ENCODE measurements at regions of chr10 and their contacts with region 1.

Region 1: DNA sequence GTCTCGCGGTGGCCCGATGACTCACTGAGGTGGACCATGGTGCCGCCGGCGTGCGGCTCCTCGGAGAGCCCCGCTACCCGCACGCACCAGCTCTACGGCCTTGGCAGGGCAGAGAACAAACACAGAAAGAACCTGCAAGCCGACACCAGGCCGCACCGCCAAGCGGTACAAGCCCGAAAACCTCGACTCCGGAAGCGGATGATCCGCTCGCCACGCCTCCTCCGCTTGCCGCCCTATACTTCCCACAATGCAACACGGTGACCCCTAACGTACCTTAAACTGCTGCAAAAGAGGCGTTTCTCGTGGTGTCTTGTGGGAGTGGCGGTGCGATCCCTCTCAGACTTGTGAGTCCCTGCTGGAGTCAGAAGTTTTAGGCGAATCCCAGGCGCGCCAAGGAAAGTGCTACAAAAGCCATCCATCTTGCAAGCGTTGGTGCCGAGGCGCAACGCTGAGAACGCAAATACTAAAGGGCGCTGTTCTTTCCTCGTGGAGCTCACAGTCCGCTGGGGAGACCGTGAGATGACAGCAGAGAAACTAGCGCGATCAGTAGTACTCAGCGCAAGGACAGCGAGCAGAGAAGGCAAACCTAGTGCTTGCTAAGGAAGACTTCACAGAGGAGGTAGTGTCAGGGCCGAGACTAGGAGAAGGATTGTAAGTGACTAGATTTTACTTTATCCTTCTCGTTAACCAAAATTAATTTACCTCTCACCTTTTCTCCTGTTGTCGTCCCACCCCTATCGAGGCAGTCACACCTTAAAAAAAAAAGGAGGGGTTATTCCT is at the start of gene MRPS16:
- DNase-seq: peak; percentile 97
- H3K4me3 ChIP-seq: peak within 1 kb of the TSS; percentile 89
- H3K27ac ChIP-seq: peak within 1 kb of the TSS; percentile 83
- H3K4me1 ChIP-seq: peaks cover 8% of the 10 kb centered on the region
- H3K27me3 ChIP-seq: no peaks in the 10 kb centered on the region
- CTCF ChIP-seq: no peak
- total RNA-seq, gene MRPS16: 90.5 to 155 TPM

Region 2: GRCh38 chr10:73413528-73414229 is 161.0 kb after region 1 on chr10 and contains the start of gene ANXA7:
- intact Hi-C with region 1: no loop called
- DNase-seq: peak; percentile 97
- H3K4me3 ChIP-seq: peak within 1 kb of the TSS; percentile 72
- H3K27ac ChIP-seq: peak within 1 kb of the TSS; percentile 95
- H3K4me1 ChIP-seq: no peaks in the 10 kb centered on the region
- H3K27me3 ChIP-seq: no peaks in the 10 kb centered on the region
- CTCF ChIP-seq: peak; percentile 33
- total RNA-seq, gene ANXA7: 120 to 133 TPM

Region 3: GRCh38 chr10:73495884-73496674 is 243.4 kb after region 1 on chr10 and contains the start of gene PPP3CB:
- intact Hi-C with region 1: loop called (anchors 10 kb)
- DNase-seq: peak; percentile 91
- H3K4me3 ChIP-seq: peak within 1 kb of the TSS; percentile 69
- H3K27ac ChIP-seq: peak within 1 kb of the TSS; percentile 99
- H3K4me1 ChIP-seq: peaks cover 7% of the 10 kb centered on the region
- H3K27me3 ChIP-seq: no peaks in the 10 kb centered on the region
- CTCF ChIP-seq: no peak
- total RNA-seq, gene PPP3CB: 26.5 to 34.2 TPM